Aorta (tissue), 5 donors: ENCODE measurements at regions of chr5 and their contacts with region 1.

Region 1: GRCh38 chr5:801472-801871 is 16.9 kb upstream of the ZDHHC11B start:
- DNase-seq: no peak
- ATAC-seq: no peak
- H3K4me3 ChIP-seq: no peak overlapping the region
- H3K27ac ChIP-seq: no peak overlapping the region
- H3K4me1 ChIP-seq: no peaks in the 10 kb centered on the region
- H3K27me3 ChIP-seq: no peaks in the 10 kb centered on the region

Region 2: DNA sequence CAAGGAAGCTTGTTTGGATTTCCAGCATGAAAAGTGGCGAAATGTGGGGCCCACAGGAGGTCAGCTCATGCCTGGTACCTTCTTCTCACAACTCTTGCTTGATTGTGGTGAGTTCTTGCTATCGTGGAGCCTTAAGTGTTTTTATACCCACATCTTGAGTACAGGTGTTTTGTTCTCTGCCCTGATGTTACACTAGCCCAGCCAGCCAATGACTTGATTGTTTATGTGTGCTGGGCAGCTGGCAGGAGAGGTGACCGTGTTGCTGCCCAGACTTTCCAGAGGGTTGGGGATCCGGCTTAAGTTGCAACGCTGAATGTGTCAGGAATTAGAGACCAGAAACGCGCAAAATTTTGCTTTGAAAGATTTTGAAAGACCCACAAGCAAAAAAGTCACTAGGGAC is 84.3 kb before region 1 on chr5:
- intact Hi-C with region 1: loop called in 1 of 2 experiments (anchors 5 kb)
- DNase-seq: no peak
- ATAC-seq: no peak
- H3K4me3 ChIP-seq: no peak overlapping the region
- H3K27ac ChIP-seq: no peak overlapping the region
- H3K4me1 ChIP-seq: no peaks in the 10 kb centered on the region
- H3K27me3 ChIP-seq: no peaks in the 10 kb centered on the region

Region 3: GRCh38 chr5:873328-873727 is 71.9 kb after region 1 on chr5:
- intact Hi-C with region 1: no loop called
- DNase-seq: no peak
- ATAC-seq: no peak
- H3K4me3 ChIP-seq: no peak overlapping the region
- H3K27ac ChIP-seq: no peak overlapping the region
- H3K4me1 ChIP-seq: no peaks in the 10 kb centered on the region
- H3K27me3 ChIP-seq: no peaks in the 10 kb centered on the region

Region 4: DNA sequence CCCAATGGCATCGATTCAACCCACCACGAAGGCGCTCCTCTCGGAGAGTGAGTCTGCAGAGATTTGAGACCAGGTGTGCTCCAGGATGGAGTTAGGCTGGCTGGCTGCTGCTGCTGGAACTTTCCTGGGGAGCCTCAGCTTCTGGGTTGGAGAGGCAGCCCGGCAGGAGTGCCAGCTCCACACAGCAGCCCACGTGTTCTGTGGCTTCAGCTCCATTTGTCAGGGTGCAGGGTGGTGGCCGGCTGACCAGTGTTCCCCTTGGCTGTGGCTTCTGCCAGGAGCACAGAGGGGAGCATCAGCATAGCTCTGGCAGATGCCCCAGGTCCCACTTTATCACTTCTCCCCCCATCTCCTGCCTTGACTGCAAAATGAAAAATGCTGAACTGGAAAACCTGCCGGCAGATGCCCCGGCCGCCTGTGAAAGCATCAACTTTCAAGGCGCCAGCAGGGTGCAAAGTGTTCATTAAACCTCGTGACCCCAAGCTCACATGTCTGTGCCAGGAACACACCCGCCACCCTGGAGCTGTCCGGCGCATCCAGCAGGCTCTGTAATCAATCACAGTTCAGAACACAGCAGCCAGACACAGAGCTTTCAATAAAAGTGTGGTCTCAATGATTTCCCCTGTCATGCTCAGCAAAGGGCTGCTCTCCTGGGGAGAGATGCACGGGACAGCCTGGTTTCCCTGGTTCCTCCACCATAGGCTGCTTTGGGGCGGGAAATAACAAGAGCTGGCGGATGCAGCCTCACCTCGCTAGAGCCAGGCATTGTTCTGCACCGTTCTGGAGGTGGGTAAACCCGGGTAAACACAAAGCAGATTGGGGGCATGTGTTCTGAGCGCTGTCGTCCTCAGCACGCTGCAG is 144.4 kb after region 1 on chr5:
- intact Hi-C with region 1: no loop called
- DNase-seq: peak in 1 of 2 donors; percentile 54
- ATAC-seq: no peak
- H3K4me3 ChIP-seq: no peak overlapping the region
- H3K27ac ChIP-seq: no peak overlapping the region
- H3K4me1 ChIP-seq: no peaks in the 10 kb centered on the region
- H3K27me3 ChIP-seq: no peaks in the 10 kb centered on the region